ENCODE measurements at regions of chr14 and their contacts with region 1.

Region 1: DNA sequence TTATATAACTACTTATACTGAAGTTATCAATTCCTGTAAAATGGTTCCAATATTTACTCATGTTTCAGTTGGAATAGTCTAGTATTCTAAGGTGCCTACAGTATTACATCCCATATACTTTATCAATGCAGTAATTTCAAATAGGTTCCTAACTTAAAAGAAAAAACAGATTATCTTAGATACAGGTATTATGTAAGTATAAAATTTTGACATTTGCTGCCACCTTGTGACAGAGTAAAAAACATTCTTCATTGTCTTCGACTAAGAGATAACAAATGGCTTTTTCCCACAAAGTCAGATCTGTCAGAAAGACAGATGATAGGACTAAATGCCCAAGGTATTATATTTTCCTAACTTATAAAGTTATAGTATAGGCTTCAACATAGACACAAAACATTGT is 78.7 kb downstream of the TXNDC16 start:
- DNase-seq: peak in 4 of 5 donors; percentile 46 to 55 (median 50)
- H3K4me3 ChIP-seq: no peak overlapping the region
- H3K4me3 Mint-ChIP-seq: no peak overlapping the region
- H3K27ac ChIP-seq: no peak overlapping the region
- H3K27ac Mint-ChIP-seq: no peak overlapping the region
- H3K4me1 ChIP-seq: peaks cover 7% of the 10 kb centered on the region
- H3K4me1 Mint-ChIP-seq: peaks cover 12 to 26% (median 17%) of the 10 kb centered on the region in 4 donors
- H3K27me3 ChIP-seq: no peaks in the 10 kb centered on the region
- H3K27me3 Mint-ChIP-seq: no peaks in the 10 kb centered on the region

Region 2: DNA sequence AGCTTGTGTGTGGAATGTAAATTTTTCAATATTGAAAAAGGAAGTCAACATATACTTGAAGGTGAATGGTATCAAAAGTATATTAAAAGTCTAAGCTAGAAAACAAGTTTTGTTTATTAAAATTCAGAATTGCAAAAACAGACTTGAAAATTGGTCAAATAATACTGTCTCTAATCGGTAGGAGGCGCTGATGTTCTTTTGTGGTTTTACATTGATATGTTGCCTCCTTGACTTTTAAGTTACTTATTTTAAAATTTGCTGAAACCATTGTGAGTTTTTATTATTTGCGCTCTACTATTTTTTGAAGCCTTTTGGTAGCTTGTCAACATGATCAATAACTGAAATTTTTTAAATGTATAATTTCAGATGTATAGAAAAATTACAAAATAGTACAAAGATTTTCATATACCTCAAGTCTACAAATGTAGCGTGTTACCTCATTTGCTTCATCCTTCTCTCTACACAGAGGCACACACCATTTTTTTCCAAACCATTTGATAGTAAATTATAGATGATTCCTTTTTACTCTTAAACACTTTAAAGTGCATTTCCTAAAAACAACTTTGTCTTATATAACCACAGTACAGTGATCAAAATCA is 477.3 kb before region 1 on chr14:
- CTCF ChIA-PET with region 1: no interaction called
- POLR2A ChIA-PET with region 1: no interaction called
- intact Hi-C with region 1: loop called (anchors 1 kb)
- DNase-seq: peak in 4 of 5 donors; percentile 34 to 51 (median 42)
- H3K4me3 ChIP-seq: no peak overlapping the region
- H3K4me3 Mint-ChIP-seq: no peak overlapping the region
- H3K27ac ChIP-seq: no peak overlapping the region
- H3K27ac Mint-ChIP-seq: peak overlapping the region in 2 of 7 donors; percentile 44 to 59
- H3K4me1 ChIP-seq: peaks cover 22% of the 10 kb centered on the region
- H3K4me1 Mint-ChIP-seq: peaks cover 20 to 32% (median 23%) of the 10 kb centered on the region in 4 donors
- H3K27me3 ChIP-seq: no peaks in the 10 kb centered on the region
- H3K27me3 Mint-ChIP-seq: no peaks in the 10 kb centered on the region

Region 3: GRCh38 chr14:52043690-52044089 is 429.9 kb before region 1 on chr14:
- CTCF ChIA-PET with region 1: interaction called, 3 read pairs
- POLR2A ChIA-PET with region 1: no interaction called
- intact Hi-C with region 1: loop called (anchors 1 kb)
- DNase-seq: peak in 4 of 5 donors; percentile 9 to 32 (median 22)
- H3K4me3 ChIP-seq: no peak overlapping the region
- H3K4me3 Mint-ChIP-seq: peak overlapping the region in 1 of 8 donors; percentile 2
- H3K27ac ChIP-seq: no peak overlapping the region
- H3K27ac Mint-ChIP-seq: peak overlapping the region in 1 of 7 donors; percentile 57
- H3K4me1 ChIP-seq: no peaks in the 10 kb centered on the region
- H3K4me1 Mint-ChIP-seq: peaks cover 0 to 4% (median 1%) of the 10 kb centered on the region in 4 donors
- H3K27me3 ChIP-seq: no peaks in the 10 kb centered on the region
- H3K27me3 Mint-ChIP-seq: peaks cover 0 to 3% of the 10 kb centered on the region in 2 donors